ENCODE measurements at regions of chr5 and their contacts with region 1.

Region 1: GRCh38 chr5:57779383-57780223 is 297.0 kb upstream of the ACTBL2 start:
- DNase-seq: peak; percentile 50 to 69
- H3K4me3 ChIP-seq: no peak overlapping the region
- H3K4me3 Mint-ChIP-seq: no peak overlapping the region
- H3K27ac Mint-ChIP-seq: no peak overlapping the region
- H3K4me1 ChIP-seq: peaks cover 34% of the 10 kb centered on the region
- H3K4me1 Mint-ChIP-seq: peaks cover 21% of the 10 kb centered on the region
- H3K27me3 ChIP-seq: no peaks in the 10 kb centered on the region
- H3K27me3 Mint-ChIP-seq: no peaks in the 10 kb centered on the region
- CTCF ChIP-seq: peak; percentile 65 to 68

Region 2: GRCh38 chr5:57499262-57500050 is 280.1 kb before region 1 on chr5:
- CTCF ChIA-PET with region 1: interaction called, 5 read pairs
- POLR2A ChIA-PET with region 1: no interaction called
- intact Hi-C with region 1: loop called (anchors 1 kb)
- DNase-seq: peak in 1 of 2 experiments; percentile 53
- H3K4me3 ChIP-seq: no peak overlapping the region
- H3K4me3 Mint-ChIP-seq: peak overlapping the region; percentile 46
- H3K27ac Mint-ChIP-seq: no peak overlapping the region
- H3K4me1 ChIP-seq: peaks cover 7% of the 10 kb centered on the region
- H3K4me1 Mint-ChIP-seq: peaks cover 8% of the 10 kb centered on the region
- H3K27me3 ChIP-seq: no peaks in the 10 kb centered on the region
- H3K27me3 Mint-ChIP-seq: no peaks in the 10 kb centered on the region
- CTCF ChIP-seq: peak; percentile 67 to 77

Region 3: DNA sequence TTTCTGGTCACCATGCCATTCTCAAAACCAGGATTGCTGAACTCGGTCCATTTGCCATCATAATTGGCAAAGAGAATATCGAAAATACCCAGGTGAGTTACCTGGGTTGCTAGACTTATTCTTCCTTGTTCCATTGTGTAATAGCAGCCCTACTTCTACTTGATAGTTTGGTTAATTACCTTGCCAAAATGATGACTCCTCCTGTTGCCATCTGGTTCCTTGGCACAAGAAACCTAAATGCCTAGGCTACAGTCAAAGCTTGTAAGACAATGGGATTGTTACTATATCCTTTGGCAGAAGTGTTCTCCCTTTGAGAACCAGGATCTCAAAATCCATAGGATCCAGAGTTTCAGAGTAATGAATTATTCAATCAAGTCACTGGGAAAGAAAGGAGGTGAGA is 76.2 kb after region 1 on chr5:
- CTCF ChIA-PET with region 1: no interaction called
- POLR2A ChIA-PET with region 1: no interaction called
- intact Hi-C with region 1: no loop called
- DNase-seq: no peak
- H3K4me3 ChIP-seq: no peak overlapping the region
- H3K4me3 Mint-ChIP-seq: no peak overlapping the region
- H3K27ac Mint-ChIP-seq: no peak overlapping the region
- H3K4me1 ChIP-seq: no peaks in the 10 kb centered on the region
- H3K4me1 Mint-ChIP-seq: no peaks in the 10 kb centered on the region
- H3K27me3 ChIP-seq: no peaks in the 10 kb centered on the region
- H3K27me3 Mint-ChIP-seq: no peaks in the 10 kb centered on the region
- CTCF ChIP-seq: no peak

Region 4: DNA sequence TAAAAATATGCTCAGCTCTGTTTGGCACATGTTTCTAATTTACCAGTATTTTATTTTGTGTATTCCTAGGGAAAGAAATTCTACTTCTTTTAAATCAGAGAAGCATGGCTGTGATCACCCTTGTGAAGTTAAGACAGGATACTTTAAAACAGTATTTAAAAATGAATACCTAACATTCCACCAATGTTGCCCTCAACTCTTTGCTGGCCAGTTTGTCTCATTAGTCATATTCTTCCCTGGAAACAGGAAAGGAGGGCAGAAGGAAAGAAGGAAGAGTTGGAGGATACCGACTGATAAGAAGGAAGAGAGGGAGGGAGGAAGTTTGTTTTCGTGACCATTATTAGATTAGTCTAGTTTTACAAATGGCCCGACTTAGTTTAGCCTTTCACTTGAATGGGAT is 542.9 kb after region 1 on chr5:
- CTCF ChIA-PET with region 1: no interaction called
- POLR2A ChIA-PET with region 1: no interaction called
- intact Hi-C with region 1: no loop called
- DNase-seq: no peak
- H3K4me3 ChIP-seq: no peak overlapping the region
- H3K4me3 Mint-ChIP-seq: no peak overlapping the region
- H3K27ac Mint-ChIP-seq: no peak overlapping the region
- H3K4me1 ChIP-seq: no peaks in the 10 kb centered on the region; the same call in 1 of the 2 replicates
- H3K4me1 Mint-ChIP-seq: peaks cover 7% of the 10 kb centered on the region
- H3K27me3 ChIP-seq: no peaks in the 10 kb centered on the region
- H3K27me3 Mint-ChIP-seq: no peaks in the 10 kb centered on the region
- CTCF ChIP-seq: no peak